A673 (cell line): ENCODE measurements at regions of chr3 and their contacts with region 1.

Region 1: DNA sequence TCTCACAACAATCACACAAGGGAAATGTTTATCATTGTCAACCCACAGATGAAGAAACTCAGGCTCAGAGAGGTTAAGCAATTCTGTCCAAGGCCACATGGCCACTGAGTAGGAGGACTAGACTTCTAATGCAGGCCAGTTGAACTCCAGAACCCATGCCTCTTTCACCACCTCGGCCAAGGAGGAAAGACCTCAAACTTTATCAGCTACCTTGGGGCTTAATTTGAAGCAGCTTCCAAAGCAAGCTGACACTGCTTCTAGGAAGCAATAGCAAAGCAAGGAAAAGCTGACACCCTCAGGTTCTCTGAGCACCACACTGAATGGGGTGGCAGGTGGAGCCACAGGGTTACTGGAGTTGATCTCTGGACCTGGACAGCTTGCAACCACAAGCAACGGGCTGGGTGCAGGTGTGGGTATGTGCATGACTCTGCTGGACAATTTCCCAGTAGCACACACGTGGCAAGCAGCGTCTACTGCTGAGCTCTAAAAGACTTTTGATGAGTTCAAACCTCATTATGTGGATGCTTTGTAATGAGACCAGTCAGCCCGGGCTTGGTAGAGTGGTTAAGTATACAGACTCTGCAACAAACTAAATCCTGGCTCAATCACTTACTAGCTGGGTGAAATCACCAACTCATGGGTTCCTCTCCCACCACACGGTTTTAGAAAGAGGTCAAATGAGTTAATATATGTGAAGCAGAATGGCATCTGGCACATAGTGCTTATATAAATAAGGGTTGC is 23.1 kb downstream of the CCNL1 start:
- DNase-seq: no peak
- H3K4me3 ChIP-seq: no peak overlapping the region
- H3K27ac ChIP-seq: peak overlapping the region; percentile 64
- H3K4me1 ChIP-seq: peaks cover 27% of the 10 kb centered on the region
- H3K27me3 ChIP-seq: no peaks in the 10 kb centered on the region
- CTCF ChIP-seq: no peak

Region 2: DNA sequence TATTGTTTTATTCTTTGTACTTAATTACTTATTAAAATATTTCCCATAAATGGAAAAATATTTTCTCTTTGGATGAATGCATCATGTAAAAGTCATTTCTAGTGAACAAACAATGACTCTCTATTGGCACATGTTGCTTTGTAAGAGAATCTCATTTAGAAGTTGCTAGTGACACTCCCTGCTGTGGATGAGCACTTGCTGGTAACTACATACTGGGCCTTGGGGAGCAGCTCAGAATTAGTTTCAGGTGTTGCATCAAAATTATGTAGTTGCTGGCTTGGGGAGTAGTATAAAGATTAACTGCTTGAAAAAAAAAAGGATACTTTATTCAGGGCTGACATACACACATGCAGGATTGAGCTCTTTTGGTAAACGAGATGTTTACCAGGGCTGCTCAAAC is 1096.8 kb before region 1 on chr3:
- CTCF ChIA-PET with region 1: interaction called, 8 read pairs
- POLR2A ChIA-PET with region 1: no interaction called
- intact Hi-C with region 1: loop called (anchors 5 kb)
- DNase-seq: no peak
- H3K4me3 ChIP-seq: no peak overlapping the region
- H3K27ac ChIP-seq: no peak overlapping the region
- H3K4me1 ChIP-seq: no peaks in the 10 kb centered on the region
- H3K27me3 ChIP-seq: no peaks in the 10 kb centered on the region
- CTCF ChIP-seq: no peak

Region 3: GRCh38 chr3:156535162-156535627 is 601.6 kb before region 1 on chr3:
- CTCF ChIA-PET with region 1: interaction called, 4 read pairs
- POLR2A ChIA-PET with region 1: no interaction called
- intact Hi-C with region 1: loop called (anchors 5 kb)
- DNase-seq: peak; percentile 92
- H3K4me3 ChIP-seq: no peak overlapping the region
- H3K27ac ChIP-seq: peak overlapping the region; percentile 48
- H3K4me1 ChIP-seq: peaks cover 48% of the 10 kb centered on the region
- H3K27me3 ChIP-seq: no peaks in the 10 kb centered on the region
- CTCF ChIP-seq: peak; percentile 33; the same call in 1 of the 2 replicates

Region 4: GRCh38 chr3:157081681-157082210 is 55.1 kb before region 1 on chr3:
- CTCF ChIA-PET with region 1: interaction called, 4 read pairs
- POLR2A ChIA-PET with region 1: no interaction called
- intact Hi-C with region 1: loop called (anchors 2 kb)
- DNase-seq: peak; percentile 97
- H3K4me3 ChIP-seq: no peak overlapping the region
- H3K27ac ChIP-seq: peak overlapping the region; percentile 62
- H3K4me1 ChIP-seq: peaks cover 45% of the 10 kb centered on the region
- H3K27me3 ChIP-seq: no peaks in the 10 kb centered on the region
- CTCF ChIP-seq: peak; percentile 97